PC-3 (cell line): ENCODE measurements at regions of chr20 and their contacts with region 1.

Region 1: GRCh38 chr20:14878768-14879697 is 541.6 kb upstream of the FLRT3 start:
- DNase-seq: peak; percentile 98
- ATAC-seq: peak; percentile 95
- H3K4me3 ChIP-seq: peak overlapping the region; percentile 2; the same call in 1 of the 2 replicates
- H3K27ac ChIP-seq: peak overlapping the region; percentile 93
- H3K4me1 ChIP-seq: peaks cover 42% of the 10 kb centered on the region
- H3K27me3 ChIP-seq: no peaks in the 10 kb centered on the region
- CTCF ChIP-seq: no peak

Region 2: DNA sequence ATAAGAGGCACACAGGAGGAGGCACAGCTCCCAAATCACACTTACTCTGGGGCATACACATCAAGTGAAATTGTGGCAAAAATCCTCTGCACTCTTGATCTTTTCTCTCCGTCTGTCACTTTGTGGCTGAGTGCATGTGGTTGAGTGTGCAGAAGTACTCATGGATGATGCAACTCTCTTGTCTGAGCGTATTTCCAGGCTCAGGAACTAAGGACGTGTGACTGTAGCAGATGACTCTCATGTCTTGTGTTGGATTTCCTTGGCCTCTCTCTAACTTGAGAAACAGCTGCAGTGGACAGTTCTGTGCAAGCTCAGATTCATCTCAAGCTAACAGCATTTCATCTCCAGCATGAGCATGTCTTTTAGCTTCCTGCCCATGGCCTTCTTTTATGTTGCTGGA is 296.2 kb before region 1 on chr20:
- CTCF ChIA-PET with region 1: no interaction called
- POLR2A ChIA-PET with region 1: interaction called, 6 read pairs
- intact Hi-C with region 1: loop called (anchors 2 kb)
- DNase-seq: peak; percentile 67
- ATAC-seq: peak; percentile 5
- H3K4me3 ChIP-seq: no peak overlapping the region
- H3K27ac ChIP-seq: peak overlapping the region; percentile 81
- H3K4me1 ChIP-seq: peaks cover 41% of the 10 kb centered on the region
- H3K27me3 ChIP-seq: no peaks in the 10 kb centered on the region
- CTCF ChIP-seq: no peak

Region 3: GRCh38 chr20:14775518-14776203 is 103.4 kb before region 1 on chr20:
- CTCF ChIA-PET with region 1: no interaction called
- POLR2A ChIA-PET with region 1: no interaction called
- intact Hi-C with region 1: loop called (anchors 5 kb)
- DNase-seq: peak; percentile 98
- ATAC-seq: peak; percentile 85
- H3K4me3 ChIP-seq: no peak overlapping the region
- H3K27ac ChIP-seq: peak overlapping the region; percentile 78
- H3K4me1 ChIP-seq: peaks cover 23% of the 10 kb centered on the region
- H3K27me3 ChIP-seq: no peaks in the 10 kb centered on the region
- CTCF ChIP-seq: no peak

Region 4: GRCh38 chr20:14820771-14821170 is 58.3 kb before region 1 on chr20:
- CTCF ChIA-PET with region 1: no interaction called
- POLR2A ChIA-PET with region 1: no interaction called
- intact Hi-C with region 1: loop called (anchors 2 kb)
- DNase-seq: peak; percentile 97
- ATAC-seq: peak; percentile 85
- H3K4me3 ChIP-seq: peak overlapping the region; percentile 48; the same call in 1 of the 2 replicates
- H3K27ac ChIP-seq: peak overlapping the region; percentile 71
- H3K4me1 ChIP-seq: peaks cover 25% of the 10 kb centered on the region
- H3K27me3 ChIP-seq: no peaks in the 10 kb centered on the region
- CTCF ChIP-seq: no peak

Region 5: GRCh38 chr20:14845199-14846160 is 33.6 kb before region 1 on chr20:
- CTCF ChIA-PET with region 1: no interaction called
- POLR2A ChIA-PET with region 1: no interaction called
- intact Hi-C with region 1: loop called (anchors 1 kb)
- DNase-seq: peak; percentile 95
- ATAC-seq: peak; percentile 100
- H3K4me3 ChIP-seq: no peak overlapping the region
- H3K27ac ChIP-seq: peak overlapping the region; percentile 47
- H3K4me1 ChIP-seq: peaks cover 18% of the 10 kb centered on the region
- H3K27me3 ChIP-seq: no peaks in the 10 kb centered on the region
- CTCF ChIP-seq: no peak

Region 6: DNA sequence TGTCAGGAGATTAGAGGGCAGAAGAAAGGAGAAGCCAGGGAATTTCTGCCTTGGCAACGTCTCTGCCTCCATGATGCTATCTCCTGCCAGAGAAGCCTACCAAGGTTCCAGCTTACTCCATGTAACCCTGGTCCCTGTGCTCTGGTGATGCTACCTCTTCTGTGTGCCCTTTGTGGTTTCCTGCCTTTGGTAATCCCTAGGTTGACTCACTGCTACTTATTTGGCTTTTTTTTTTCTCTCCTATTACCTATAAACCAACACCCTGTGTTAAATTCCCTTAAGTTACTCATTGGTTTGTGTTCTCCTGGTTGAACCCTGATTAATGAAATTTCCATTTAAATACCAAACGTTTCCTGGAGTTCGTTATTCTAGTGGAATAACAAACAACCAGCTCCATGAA is 13.9 kb before region 1 on chr20:
- CTCF ChIA-PET with region 1: no interaction called
- POLR2A ChIA-PET with region 1: no interaction called
- intact Hi-C with region 1: no loop called
- DNase-seq: peak; percentile 84
- ATAC-seq: peak; percentile 86
- H3K4me3 ChIP-seq: no peak overlapping the region
- H3K27ac ChIP-seq: no peak overlapping the region
- H3K4me1 ChIP-seq: peaks cover 32% of the 10 kb centered on the region
- H3K27me3 ChIP-seq: no peaks in the 10 kb centered on the region
- CTCF ChIP-seq: no peak

Region 7: GRCh38 chr20:14919480-14920440 is 40.7 kb after region 1 on chr20:
- CTCF ChIA-PET with region 1: no interaction called
- POLR2A ChIA-PET with region 1: interaction called, 4 read pairs
- intact Hi-C with region 1: loop called (anchors 5 kb)
- DNase-seq: peak; percentile 77
- ATAC-seq: peak; percentile 49
- H3K4me3 ChIP-seq: peak overlapping the region; percentile 18; the same call in 1 of the 2 replicates
- H3K27ac ChIP-seq: no peak overlapping the region
- H3K4me1 ChIP-seq: peaks cover 28% of the 10 kb centered on the region
- H3K27me3 ChIP-seq: no peaks in the 10 kb centered on the region
- CTCF ChIP-seq: no peak

Region 8: DNA sequence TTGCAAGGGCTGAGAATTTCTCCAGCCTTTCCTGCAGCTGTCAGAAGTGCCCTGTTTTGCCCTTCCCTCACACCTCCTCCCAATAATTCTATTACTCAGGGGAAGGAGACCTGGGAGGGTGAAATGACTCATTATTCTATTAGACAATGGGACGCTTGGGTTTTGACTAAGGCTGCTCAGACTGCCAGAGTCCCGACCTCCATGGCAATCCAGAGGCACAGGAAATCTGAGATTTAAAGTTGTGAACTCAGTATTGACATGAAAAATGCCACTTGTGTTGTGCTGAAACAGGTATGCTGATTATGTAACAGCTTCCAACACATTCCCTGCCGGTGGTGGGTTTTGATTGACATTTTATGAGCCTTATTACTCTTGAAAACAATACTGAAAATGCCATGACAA is 84.2 kb after region 1 on chr20:
- CTCF ChIA-PET with region 1: no interaction called
- POLR2A ChIA-PET with region 1: no interaction called
- intact Hi-C with region 1: loop called (anchors 1 kb)
- DNase-seq: peak; percentile 94
- ATAC-seq: peak; percentile 100
- H3K4me3 ChIP-seq: peak overlapping the region; percentile 21; the same call in 1 of the 2 replicates
- H3K27ac ChIP-seq: peak overlapping the region; percentile 51
- H3K4me1 ChIP-seq: peaks cover 14% of the 10 kb centered on the region
- H3K27me3 ChIP-seq: no peaks in the 10 kb centered on the region
- CTCF ChIP-seq: no peak